ENCODE measurements at regions of chr17 and their contacts with region 1.

Region 1: DNA sequence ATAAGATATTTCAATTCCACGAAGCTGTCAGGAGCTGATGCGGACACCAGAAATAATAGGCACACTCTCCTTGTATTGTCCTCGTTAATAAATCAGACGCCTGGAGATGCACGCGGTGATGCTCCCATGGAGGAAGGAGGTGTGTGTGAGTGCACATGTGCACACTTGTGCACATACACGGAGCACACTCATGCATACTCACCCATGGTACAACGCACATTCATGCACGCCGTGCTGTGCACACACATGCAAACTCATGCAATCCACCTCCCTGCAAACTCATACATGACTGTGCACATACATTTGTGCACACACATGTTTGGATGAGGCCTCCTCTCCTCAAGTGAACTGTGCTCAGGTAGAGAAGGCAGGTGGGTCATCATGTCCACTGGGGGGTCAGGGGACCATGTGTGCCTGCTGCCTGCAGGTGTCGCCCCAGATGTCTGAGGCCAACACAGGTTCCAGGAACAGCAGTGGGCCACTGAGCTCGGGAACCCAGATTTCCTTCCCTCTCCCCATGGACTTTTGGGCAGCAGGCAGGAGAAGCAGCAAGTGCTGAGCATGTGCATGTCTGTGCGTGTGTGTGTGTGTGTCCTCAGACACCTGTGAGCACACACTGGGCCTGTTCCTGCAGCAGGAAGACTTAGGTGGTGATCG is 165.3 kb downstream of the SDK2 start:
- DNase-seq: peak; percentile 58
- ATAC-seq: peak; percentile 75
- H3K4me3 Mint-ChIP-seq: no peak overlapping the region
- H3K27ac Mint-ChIP-seq: peak overlapping the region; percentile 52
- H3K4me1 Mint-ChIP-seq: peaks cover 31% of the 10 kb centered on the region
- H3K27me3 Mint-ChIP-seq: peaks cover 2% of the 10 kb centered on the region; the same call in 1 of the 2 replicates
- CTCF ChIP-seq: peak; percentile 29; the same call in 1 of the 2 replicates

Region 2: DNA sequence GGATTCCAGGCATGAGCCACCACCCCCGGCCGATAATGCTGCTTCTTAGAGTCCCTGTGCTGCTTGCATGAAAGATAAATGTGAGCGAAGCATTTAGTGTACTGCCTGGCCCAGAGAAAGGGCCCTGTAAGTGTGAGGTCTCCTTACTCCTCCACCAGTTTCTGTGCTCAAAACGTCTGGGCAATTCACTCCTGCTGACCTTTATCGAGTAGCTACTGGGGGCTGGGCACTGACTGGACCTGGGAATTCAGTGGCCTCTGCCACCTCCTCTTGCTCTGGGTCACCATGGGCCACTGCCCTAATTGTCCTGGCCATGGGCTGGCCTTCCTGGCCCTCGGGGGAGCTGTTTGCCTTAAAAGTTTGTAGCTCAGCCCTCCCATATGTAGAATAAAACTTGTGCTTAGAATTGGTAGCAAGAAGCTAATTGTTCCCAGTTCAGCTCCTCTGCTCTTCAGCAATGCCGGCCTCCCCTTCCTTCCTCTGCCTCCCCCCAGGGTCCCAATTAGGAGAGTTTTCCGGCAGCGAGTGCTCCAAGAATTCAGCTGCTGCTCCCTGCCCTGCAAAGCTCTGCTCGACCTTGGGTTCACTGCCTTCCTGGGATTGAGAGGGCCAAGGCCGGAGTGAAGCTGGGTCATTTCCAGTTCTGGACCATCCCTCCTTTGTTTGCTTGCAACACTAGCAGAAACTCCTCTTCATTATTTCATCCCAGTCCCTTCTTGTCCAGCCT is 68.1 kb before region 1 on chr17:
- CTCF ChIA-PET with region 1: no interaction called
- POLR2A ChIA-PET with region 1: no interaction called
- DNase-seq: no peak
- ATAC-seq: no peak
- H3K4me3 Mint-ChIP-seq: no peak overlapping the region
- H3K27ac Mint-ChIP-seq: 0 out of 2 replicates have a peak overlapping the region, but pooled peaks have one; percentile 26
- H3K4me1 Mint-ChIP-seq: 0 out of 2 replicates have a peak, but pooled peaks cover 4% of the 10 kb centered on the region
- H3K27me3 Mint-ChIP-seq: no peaks in the 10 kb centered on the region
- CTCF ChIP-seq: no peak

Region 3: GRCh38 chr17:73436954-73437353 is 41.9 kb before region 1 on chr17:
- CTCF ChIA-PET with region 1: no interaction called
- POLR2A ChIA-PET with region 1: no interaction called
- DNase-seq: no peak
- ATAC-seq: no peak
- H3K4me3 Mint-ChIP-seq: no peak overlapping the region
- H3K27ac Mint-ChIP-seq: no peak overlapping the region
- H3K4me1 Mint-ChIP-seq: no peaks in the 10 kb centered on the region
- H3K27me3 Mint-ChIP-seq: no peaks in the 10 kb centered on the region
- CTCF ChIP-seq: no peak

Region 4: DNA sequence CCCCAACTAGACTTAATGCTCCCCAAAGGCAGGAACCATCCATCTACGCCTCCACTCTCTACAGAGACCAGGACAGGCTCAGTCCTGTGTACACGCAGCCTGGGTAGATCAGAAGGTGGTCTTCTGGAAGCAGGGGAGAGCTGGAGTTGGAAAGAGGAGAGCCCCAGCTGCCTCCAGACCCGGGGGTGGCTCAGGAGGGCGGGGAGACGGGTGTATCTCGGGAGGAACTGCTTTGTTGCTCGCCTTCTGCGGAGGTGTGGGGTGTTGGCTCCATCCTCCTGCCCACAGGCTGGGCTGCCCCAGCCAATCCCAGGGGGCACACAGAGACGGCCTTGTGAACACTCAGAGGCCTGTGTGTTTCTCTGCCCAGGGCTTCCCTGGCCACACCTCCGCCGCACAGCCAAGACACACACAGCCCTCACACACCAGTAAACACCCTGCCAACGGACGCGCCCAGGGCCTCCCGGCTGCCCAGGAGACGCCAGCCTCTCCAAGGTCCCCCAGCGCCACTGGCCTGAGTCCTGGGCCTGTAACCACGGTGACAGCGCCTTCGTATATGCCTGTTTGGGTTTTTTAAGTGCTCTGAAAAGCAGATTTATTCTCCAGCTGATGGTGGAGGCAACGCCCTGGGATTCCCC is 23.7 kb before region 1 on chr17:
- CTCF ChIA-PET with region 1: interaction called, 11 read pairs
- POLR2A ChIA-PET with region 1: no interaction called
- DNase-seq: no peak
- ATAC-seq: no peak
- H3K4me3 Mint-ChIP-seq: no peak overlapping the region
- H3K27ac Mint-ChIP-seq: no peak overlapping the region
- H3K4me1 Mint-ChIP-seq: no peaks in the 10 kb centered on the region
- H3K27me3 Mint-ChIP-seq: no peaks in the 10 kb centered on the region
- CTCF ChIP-seq: no peak

Region 5: DNA sequence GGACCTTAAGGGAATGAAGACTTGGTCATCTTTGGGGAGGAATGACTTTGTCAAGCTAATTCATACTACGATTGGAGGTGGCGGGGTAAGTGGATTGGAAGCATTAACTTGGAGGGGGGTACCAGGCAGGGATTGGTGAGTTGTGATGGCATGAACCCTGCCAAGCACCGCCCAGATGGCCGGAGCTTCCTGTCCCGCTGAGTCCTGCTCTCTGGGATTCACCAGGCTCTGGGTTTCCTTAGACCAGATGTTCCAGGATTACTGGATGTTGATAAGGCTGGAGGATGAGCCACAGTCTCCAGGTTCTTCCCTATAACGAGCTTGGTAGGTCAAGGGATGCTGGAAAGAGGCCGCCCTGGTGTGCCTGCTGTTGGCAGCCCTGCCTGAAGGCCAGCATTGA is 10.4 kb after region 1 on chr17:
- CTCF ChIA-PET with region 1: interaction called, 25 read pairs
- POLR2A ChIA-PET with region 1: interaction called, 4 read pairs
- DNase-seq: no peak
- ATAC-seq: no peak
- H3K4me3 Mint-ChIP-seq: no peak overlapping the region
- H3K27ac Mint-ChIP-seq: peak overlapping the region; percentile 76
- H3K4me1 Mint-ChIP-seq: peaks cover 59% of the 10 kb centered on the region
- H3K27me3 Mint-ChIP-seq: peaks cover 3% of the 10 kb centered on the region; the same call in 1 of the 2 replicates
- CTCF ChIP-seq: no peak

Region 6: DNA sequence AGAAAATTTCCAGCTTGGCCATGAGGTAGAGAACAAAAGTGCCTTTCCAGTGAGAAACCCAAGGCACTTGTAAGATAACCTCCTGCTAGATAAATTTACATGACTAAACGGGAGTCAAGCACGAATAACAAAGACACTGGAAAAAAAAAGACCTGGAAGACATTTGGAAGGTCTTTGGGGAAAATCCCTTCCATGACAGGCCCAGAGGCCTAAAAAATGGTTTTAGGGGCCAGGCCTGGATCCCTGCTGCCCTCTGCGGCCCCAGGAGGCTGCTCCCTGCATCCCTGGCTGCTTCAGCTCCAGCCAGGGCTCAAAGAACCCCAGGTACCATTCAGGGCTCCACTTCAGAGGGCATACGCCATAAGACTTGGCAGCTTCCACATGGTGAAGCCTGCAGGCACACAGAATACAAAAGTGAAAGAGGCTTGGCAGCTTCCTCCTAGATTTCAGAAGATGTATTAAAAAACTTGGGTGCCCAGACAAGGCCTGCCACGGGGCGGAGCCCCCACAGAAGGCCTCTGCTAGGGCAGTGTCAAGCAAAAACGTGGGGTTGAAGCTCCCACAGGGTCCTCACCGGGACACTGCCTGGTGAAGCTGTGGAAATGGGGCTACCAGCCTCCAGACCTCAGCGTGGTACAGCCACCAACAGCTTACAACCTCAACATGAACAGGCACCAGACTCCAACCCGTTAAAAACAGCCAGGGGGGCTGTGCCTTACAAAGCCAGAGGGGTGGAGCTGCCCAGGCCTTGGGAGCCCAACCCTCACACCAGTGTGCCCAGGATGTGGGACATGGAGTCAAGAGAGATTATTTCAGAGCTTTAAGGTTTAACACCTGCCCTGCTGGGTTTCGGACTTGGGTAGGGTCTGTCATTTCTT is 88.2 kb after region 1 on chr17:
- CTCF ChIA-PET with region 1: interaction called, 15 read pairs
- POLR2A ChIA-PET with region 1: no interaction called
- DNase-seq: no peak
- ATAC-seq: peak; percentile 79
- H3K4me3 Mint-ChIP-seq: peak overlapping the region; percentile 25; the same call in 1 of the 2 replicates
- H3K27ac Mint-ChIP-seq: peak overlapping the region; percentile 95
- H3K4me1 Mint-ChIP-seq: peaks cover 79% of the 10 kb centered on the region
- H3K27me3 Mint-ChIP-seq: no peaks in the 10 kb centered on the region
- CTCF ChIP-seq: no peak

Region 7: DNA sequence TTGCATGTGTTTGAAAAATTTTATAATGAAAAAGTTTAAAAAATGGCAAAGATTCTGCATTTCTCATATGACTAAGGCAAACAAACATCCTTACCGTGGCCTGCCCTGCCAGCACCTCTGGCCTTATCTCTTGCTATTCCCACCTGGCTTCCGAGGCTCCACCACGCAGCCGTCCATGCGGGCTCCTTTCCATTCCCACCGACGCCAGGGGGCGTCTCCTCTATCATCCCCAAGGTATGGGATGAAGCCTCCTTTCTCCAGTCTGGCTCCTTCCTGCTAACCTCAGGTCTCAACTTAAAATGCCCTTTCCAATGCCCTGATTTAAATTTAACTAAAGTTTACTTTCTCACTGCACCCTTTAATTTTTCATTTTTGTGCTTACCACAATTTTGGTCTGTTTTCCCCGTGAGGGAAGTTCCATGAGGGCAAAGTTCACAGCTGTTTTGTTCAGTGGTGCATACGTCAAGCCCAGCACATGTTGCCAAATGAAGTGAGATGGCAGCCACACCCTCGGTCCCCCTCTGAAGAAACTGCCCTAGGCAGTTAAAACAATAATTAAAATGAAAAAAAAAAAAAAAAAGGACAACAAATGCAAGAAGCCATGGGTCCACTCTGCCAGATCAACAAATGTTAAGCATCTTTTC is 178.7 kb after region 1 on chr17:
- CTCF ChIA-PET with region 1: no interaction called
- POLR2A ChIA-PET with region 1: no interaction called
- DNase-seq: peak; percentile 87
- ATAC-seq: peak; percentile 96
- H3K4me3 Mint-ChIP-seq: no peak overlapping the region
- H3K27ac Mint-ChIP-seq: no peak overlapping the region
- H3K4me1 Mint-ChIP-seq: peaks cover 15% of the 10 kb centered on the region
- H3K27me3 Mint-ChIP-seq: peaks cover 17% of the 10 kb centered on the region
- CTCF ChIP-seq: peak; percentile 69; the same call in 1 of the 2 replicates